ENCODE measurements at regions of chr12 and their contacts with region 1.

Region 1: GRCh38 chr12:27523642-27524493 is at the start of gene PPFIBP1:
- H3K4me3 ChIP-seq: peak within 1 kb of the TSS; percentile 65
- H3K27ac ChIP-seq: peak within 1 kb of the TSS; percentile 57; the same call in 1 of the 2 replicates
- H3K4me1 ChIP-seq: no peaks in the 10 kb centered on the region
- CTCF ChIP-seq: peak; percentile 79

Region 2: GRCh38 chr12:27534060-27534764 is 10.3 kb after region 1 on chr12:
- CTCF ChIA-PET with region 1: interaction called, 6 read pairs
- POLR2A ChIA-PET with region 1: interaction called, 10 read pairs
- H3K4me3 ChIP-seq: no peak overlapping the region
- H3K27ac ChIP-seq: no peak overlapping the region
- H3K4me1 ChIP-seq: peaks cover 6% of the 10 kb centered on the region
- CTCF ChIP-seq: no peak

Region 3: GRCh38 chr12:27549801-27550652 is 26.2 kb after region 1 on chr12:
- CTCF ChIA-PET with region 1: interaction called, 3 read pairs
- POLR2A ChIA-PET with region 1: interaction called, 16 read pairs
- H3K4me3 ChIP-seq: 0 out of 2 replicates have a peak overlapping the region, but pooled peaks have one; percentile 1
- H3K27ac ChIP-seq: no peak overlapping the region; the same call in 1 of the 2 replicates
- H3K4me1 ChIP-seq: peaks cover 26% of the 10 kb centered on the region
- CTCF ChIP-seq: no peak

Region 4: GRCh38 chr12:27689558-27690180 is 165.8 kb after region 1 on chr12:
- CTCF ChIA-PET with region 1: no interaction called
- POLR2A ChIA-PET with region 1: no interaction called
- H3K4me3 ChIP-seq: no peak overlapping the region
- H3K27ac ChIP-seq: no peak overlapping the region
- H3K4me1 ChIP-seq: no peaks in the 10 kb centered on the region
- CTCF ChIP-seq: no peak

Measured in HEK293 (cell line).